ENCODE measurements at regions of chr4 and their contacts with region 1.

Region 1: DNA sequence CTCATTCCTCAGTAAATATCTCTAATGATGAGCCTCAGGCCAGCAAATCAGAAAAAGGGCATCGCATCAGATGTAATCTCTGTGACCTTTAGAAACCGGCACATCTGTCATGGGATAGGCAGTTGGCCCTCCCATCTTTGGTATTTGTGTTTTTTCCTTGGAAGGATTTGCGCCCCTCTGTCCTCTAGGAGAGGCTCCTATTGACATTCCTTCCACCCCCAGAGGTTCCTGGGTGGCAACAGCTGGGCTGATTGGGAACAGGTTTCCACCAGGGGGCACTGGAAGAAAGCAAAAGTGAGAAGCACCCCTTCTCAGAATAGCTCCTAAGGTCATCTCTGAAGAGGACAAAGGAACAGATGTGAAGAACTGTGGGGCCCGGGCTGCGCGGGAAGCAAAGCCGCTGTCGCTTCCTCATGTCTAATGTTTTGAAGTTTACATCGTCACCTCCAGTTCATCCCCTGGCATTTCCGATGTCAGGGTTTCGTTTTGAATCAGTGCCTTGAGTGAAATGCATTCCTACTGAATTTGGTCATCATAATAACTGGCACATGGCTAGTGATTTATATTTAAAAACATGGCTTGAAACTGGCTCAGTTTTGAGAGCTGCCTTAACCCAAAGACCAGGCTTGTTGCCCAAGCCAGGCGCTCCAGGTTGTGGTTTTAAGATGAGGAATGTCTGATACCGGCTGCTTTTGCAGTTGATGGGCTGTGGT is 6.2 kb downstream of the TXK start:
- DNase-seq: peak; percentile 30 to 85 (median 58)
- ATAC-seq: peak; percentile 90
- H3K4me3 ChIP-seq: no peak overlapping the region
- H3K27ac ChIP-seq: no peak overlapping the region
- H3K4me1 ChIP-seq: peaks cover 6 to 38% of the 10 kb centered on the region in 2 experiments; a peak in 4 of 5 replicates
- H3K27me3 ChIP-seq: no peaks in the 10 kb centered on the region
- CTCF ChIP-seq: peak; percentile 81 to 88 (median 86)
- EP300 ChIP-seq: no peak
- POLR2A ChIP-seq: no peak
- RAD21 ChIP-seq: peak; percentile 83 to 91

Region 2: DNA sequence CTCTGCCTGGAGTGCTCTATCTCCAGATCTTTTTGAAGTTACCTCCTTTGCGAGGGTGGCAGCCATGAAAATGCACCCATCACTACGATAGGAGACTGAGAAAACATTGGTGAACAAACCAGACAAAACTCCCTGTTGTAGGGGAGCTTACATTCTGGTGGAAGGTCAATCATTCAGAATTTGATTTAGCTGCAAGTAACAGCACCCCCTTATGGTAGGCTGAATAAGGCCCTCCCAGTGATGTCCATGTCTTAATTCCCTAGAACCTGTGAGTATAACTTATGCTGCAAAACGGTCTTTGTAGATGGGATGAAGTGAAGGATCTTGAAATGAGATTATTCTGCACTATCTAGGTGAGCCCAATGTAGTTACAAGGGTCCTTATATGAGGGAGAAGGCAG is 147.4 kb after region 1 on chr4:
- CTCF ChIA-PET with region 1: interaction called, 3 read pairs
- POLR2A ChIA-PET with region 1: interaction called, 3 read pairs
- in situ Hi-C with region 1: no loop called
- intact Hi-C with region 1: loop called (anchors 1 kb)
- DNase-seq: peak in 2 of 4 experiments; percentile 53 to 71
- ATAC-seq: peak; percentile 90
- H3K4me3 ChIP-seq: no peak overlapping the region
- H3K27ac ChIP-seq: no peak overlapping the region
- H3K4me1 ChIP-seq: peaks cover 0 to 11% of the 10 kb centered on the region in 2 experiments; a peak in 3 of 5 replicates
- H3K27me3 ChIP-seq: no peaks in the 10 kb centered on the region
- CTCF ChIP-seq: peak; percentile 61 to 81 (median 78)
- EP300 ChIP-seq: no peak
- POLR2A ChIP-seq: no peak
- RAD21 ChIP-seq: peak; percentile 46 to 86

Region 3: DNA sequence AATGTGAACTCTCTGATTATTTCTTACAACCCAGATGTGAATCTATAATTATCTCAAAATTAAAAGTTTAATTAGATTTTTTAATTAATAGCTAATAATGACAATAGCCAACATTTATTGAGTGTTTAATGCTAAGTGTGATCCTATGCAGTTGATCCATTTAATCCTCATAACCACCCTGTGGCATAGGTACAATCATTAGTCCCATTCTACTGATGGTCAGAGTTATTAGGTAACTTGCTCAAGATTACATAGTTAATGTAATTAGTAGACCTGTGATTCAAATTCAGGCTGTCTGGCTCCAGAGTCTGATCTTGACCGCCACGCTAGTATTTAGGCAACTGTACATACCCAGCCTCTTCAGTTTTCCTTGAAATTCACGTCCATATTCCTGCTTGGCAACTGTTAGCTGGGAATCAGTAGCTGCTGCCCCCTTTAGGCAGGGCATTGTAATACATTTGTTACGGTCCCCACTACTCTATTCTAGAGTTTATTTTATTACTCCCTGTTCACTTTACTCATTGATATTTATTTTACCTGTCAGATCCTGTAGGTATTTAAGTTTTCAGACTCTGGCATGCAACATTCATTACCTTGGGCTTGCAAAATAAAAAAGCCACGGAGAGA is 162.4 kb after region 1 on chr4:
- CTCF ChIA-PET with region 1: no interaction called
- POLR2A ChIA-PET with region 1: no interaction called
- in situ Hi-C with region 1: no loop called
- intact Hi-C with region 1: loop called (anchors 5 kb)
- DNase-seq: peak; percentile 60 to 68 (median 64)
- ATAC-seq: peak; percentile 92
- H3K4me3 ChIP-seq: no peak overlapping the region
- H3K27ac ChIP-seq: no peak overlapping the region
- H3K4me1 ChIP-seq: peaks cover 0 to 5% of the 10 kb centered on the region in 2 experiments; a peak in 1 of 5 replicates
- H3K27me3 ChIP-seq: no peaks in the 10 kb centered on the region
- CTCF ChIP-seq: peak; percentile 68 to 79 (median 77)
- EP300 ChIP-seq: no peak
- POLR2A ChIP-seq: no peak
- RAD21 ChIP-seq: peak; percentile 55 to 68

Region 4: GRCh38 chr4:48445704-48446103 is 317.9 kb after region 1 on chr4:
- CTCF ChIA-PET with region 1: interaction called, 3 read pairs
- POLR2A ChIA-PET with region 1: no interaction called
- in situ Hi-C with region 1: no loop called
- intact Hi-C with region 1: loop called (anchors 10 kb)
- DNase-seq: no peak
- ATAC-seq: no peak
- H3K4me3 ChIP-seq: no peak overlapping the region
- H3K27ac ChIP-seq: no peak overlapping the region
- H3K4me1 ChIP-seq: peaks cover 0 to 2% of the 10 kb centered on the region in 2 experiments; a peak in 3 of 5 replicates
- H3K27me3 ChIP-seq: no peaks in the 10 kb centered on the region
- CTCF ChIP-seq: peak in 2 of 3 experiments; percentile 15 to 66; a peak in 2 of 6 replicates
- EP300 ChIP-seq: no peak
- POLR2A ChIP-seq: no peak
- RAD21 ChIP-seq: peak; percentile 61 to 67

Region 5: GRCh38 chr4:48483006-48483776 is 355.4 kb after region 1 on chr4 and contains the start of gene SLC10A4:
- CTCF ChIA-PET with region 1: no interaction called
- POLR2A ChIA-PET with region 1: no interaction called
- in situ Hi-C with region 1: no loop called
- intact Hi-C with region 1: loop called (anchors 10 kb)
- DNase-seq: peak; percentile 83 to 89 (median 86)
- ATAC-seq: peak; percentile 80
- H3K4me3 ChIP-seq: peak within 1 kb of the TSS; percentile 51
- H3K27ac ChIP-seq: peak within 1 kb of the TSS; percentile 77
- H3K4me1 ChIP-seq: peaks cover 26 to 30% of the 10 kb centered on the region in 2 experiments
- H3K27me3 ChIP-seq: no peaks in the 10 kb centered on the region
- CTCF ChIP-seq: no peak
- EP300 ChIP-seq: peak; percentile 55; the same call in 1 of the 2 replicates
- POLR2A ChIP-seq: no peak
- RAD21 ChIP-seq: no peak
- polyA plus RNA-seq, gene SLC10A4: 2.5 to 3.1 TPM

Region 6: DNA sequence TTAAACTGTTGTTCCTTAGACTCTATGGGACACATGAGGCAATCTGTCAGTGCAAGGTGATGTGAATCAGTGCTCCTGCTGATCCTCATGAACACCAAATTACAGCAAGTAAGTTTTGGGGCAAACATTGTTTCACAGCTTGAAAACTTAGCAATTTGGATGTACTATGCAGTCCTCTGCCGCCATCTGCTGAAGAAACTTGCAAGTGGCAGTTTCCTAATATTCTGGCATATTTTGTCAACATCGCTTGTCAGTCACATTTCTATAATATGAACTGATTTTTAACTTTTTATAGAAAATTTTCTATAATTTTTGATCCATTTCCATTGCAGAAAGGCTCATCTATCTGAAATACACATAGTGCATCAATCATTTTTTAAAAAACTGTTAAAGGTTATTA is 418.5 kb after region 1 on chr4:
- CTCF ChIA-PET with region 1: interaction called, 17 read pairs
- POLR2A ChIA-PET with region 1: interaction called, 4 read pairs
- in situ Hi-C with region 1: loop called (anchors 5 kb)
- intact Hi-C with region 1: loop called (anchors 1 kb)
- DNase-seq: peak in 3 of 4 experiments; percentile 17 to 67 (median 21)
- ATAC-seq: peak; percentile 77
- H3K4me3 ChIP-seq: no peak overlapping the region
- H3K27ac ChIP-seq: no peak overlapping the region
- H3K4me1 ChIP-seq: no peaks in the 10 kb centered on the region
- H3K27me3 ChIP-seq: no peaks in the 10 kb centered on the region
- CTCF ChIP-seq: peak; percentile 73 to 93 (median 76)
- EP300 ChIP-seq: no peak
- POLR2A ChIP-seq: no peak
- RAD21 ChIP-seq: peak; percentile 85 to 93

Region 7: DNA sequence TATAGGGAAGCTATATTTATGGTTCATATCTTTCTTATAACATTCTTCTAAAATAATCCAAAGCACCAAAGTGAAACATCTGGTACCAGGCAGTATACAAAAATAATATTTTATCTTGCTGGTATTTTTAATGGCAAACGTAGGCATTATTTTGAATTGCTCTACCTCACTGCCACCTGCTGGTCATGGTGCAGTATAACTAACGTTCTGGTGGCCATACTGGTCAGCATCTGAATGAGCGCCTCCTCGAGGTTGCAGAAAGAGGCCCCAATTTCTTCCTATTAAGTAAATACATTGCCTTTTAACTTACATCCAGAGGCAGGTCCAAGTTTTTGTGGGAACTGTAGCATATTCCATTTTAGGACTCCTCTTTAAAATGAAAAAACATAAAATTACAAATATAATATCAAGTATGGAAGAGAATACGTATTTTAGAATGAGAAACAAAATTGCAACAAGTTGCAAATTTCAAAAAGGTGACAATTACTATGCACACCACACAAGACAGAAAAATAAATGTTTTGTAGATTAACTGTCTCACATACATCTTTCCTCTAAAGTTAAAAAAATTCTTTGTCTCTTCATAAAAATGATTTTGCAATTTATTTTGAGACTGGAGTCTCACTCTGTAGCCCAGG is 835.3 kb after region 1 on chr4:
- CTCF ChIA-PET with region 1: no interaction called
- POLR2A ChIA-PET with region 1: no interaction called
- in situ Hi-C with region 1: no loop called
- intact Hi-C with region 1: loop called (anchors 5 kb)
- DNase-seq: peak; percentile 72 to 86 (median 76)
- ATAC-seq: peak; percentile 93
- H3K4me3 ChIP-seq: no peak overlapping the region
- H3K27ac ChIP-seq: no peak overlapping the region
- H3K4me1 ChIP-seq: no peaks in the 10 kb centered on the region
- H3K27me3 ChIP-seq: no peaks in the 10 kb centered on the region
- CTCF ChIP-seq: peak; percentile 98 to 100 (median 100)
- EP300 ChIP-seq: no peak
- POLR2A ChIP-seq: no peak
- RAD21 ChIP-seq: peak; percentile 95